Heart left ventricle (tissue), 16 donors: ENCODE measurements at regions of chr15 and their contacts with region 1.

Region 1: DNA sequence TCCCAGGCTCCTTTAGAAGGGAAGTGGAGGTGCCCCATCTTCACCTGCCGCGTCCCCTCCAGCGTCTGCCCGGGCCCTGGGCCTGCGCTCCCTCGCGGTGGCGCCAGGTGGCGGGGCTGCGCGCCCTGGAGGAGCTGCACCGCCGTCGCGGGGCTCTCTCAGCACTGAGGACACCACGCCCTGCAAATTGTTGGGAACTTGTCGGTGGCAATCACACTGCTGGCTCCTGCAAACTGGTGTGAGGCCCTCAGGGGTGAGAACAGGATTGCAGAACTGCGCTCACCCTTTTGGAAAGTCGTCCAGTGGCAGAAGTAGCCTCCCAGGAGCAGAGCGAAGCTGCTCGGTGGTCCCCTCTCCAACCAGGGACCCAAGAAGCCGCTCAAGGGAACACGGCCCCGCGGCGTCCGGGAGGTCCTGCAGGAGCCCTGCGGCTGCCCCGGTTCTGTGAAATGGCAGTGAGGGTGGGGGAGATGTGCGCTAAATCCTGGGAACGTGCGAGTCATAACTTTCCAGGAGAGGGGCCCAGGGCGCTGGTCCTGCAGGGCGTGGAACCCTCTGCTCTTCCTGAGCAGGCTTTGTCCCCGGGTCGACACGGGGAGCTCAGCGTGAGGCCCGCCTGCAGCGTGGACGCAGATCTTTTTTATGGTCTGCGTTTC is 995 bp upstream of the LRRK1 start:
- DNase-seq: peak; percentile 78 to 89 (median 80)
- ATAC-seq: peak; percentile 79 to 94 (median 94)
- H3K4me3 ChIP-seq: peak overlapping the region; percentile 27 to 78 (median 65)
- H3K27ac ChIP-seq: peak overlapping the region in 5 of 12 donors; percentile 28 to 76 (median 69)
- H3K4me1 ChIP-seq: peaks cover 0 to 41% (median 9%) of the 10 kb centered on the region in 12 donors
- H3K27me3 ChIP-seq: peaks cover 0 to 24% (median 9%) of the 10 kb centered on the region in 9 donors
- CTCF ChIP-seq: peak; percentile 79 to 93 (median 90)
- POLR2A ChIP-seq: no peak

Region 2: DNA sequence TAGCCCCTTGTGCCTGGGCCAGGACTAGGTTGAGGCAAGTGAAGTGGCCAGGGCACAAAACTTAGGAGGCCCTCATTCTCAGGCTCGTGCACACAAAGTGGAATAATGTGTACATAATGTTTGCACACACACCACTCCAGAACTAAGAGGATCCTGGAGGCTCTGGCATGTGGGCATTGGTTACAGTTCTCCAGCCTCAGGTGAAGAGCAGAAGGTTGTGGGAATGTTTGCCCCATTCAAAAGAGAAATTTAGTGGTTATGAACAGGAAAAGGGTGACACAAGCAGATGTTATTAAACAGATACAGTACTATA is 284.4 kb before region 1 on chr15:
- intact Hi-C with region 1: loop called in 1 of 10 experiments (anchors 5 kb)
- DNase-seq: no peak
- ATAC-seq: no peak
- H3K4me3 ChIP-seq: no peak overlapping the region
- H3K27ac ChIP-seq: no peak overlapping the region
- H3K4me1 ChIP-seq: peaks cover 0 to 4% (median 0%) of the 10 kb centered on the region in 12 donors
- H3K27me3 ChIP-seq: no peaks in the 10 kb centered on the region
- CTCF ChIP-seq: no peak
- POLR2A ChIP-seq: no peak

Region 3: DNA sequence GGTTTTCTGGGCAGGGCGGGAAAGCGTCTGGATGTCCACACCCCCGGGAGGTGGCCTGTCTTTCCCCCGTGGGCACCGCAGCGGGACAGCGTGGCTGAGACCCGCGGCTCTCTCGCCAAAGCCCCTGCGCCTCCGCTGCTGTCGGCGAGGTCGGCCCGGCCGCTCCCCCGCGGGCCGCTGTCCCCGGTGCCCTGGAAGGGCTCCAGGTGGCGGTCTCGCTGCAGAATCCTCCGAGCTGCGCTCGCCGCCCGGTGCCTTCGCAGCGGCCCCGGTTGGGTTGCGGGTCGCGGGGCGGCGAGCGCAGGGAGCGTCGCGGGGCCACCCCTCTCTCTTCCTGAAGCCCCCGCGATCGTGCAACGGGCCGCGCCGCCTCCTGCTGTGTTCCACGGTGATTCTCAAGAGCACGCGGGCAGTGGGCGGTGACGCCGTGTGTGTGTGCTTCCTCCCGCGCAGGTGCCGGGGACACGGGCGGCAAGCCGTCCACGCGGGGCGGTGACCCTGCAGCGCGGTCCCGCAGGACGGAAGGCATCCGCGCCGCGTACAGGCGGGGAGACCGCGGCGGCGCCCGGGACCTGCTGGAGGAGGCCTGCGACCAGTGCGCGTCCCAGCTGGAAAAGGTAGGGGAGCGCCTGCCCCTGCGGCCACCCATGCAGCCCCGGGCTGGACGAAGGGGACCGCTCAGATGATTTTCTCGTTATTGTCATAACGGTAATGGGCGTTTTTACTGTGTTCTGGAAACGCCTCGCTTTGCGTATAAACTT is 55.4 kb after region 1 on chr15:
- intact Hi-C with region 1: loop called in 1 of 10 experiments (anchors 2 kb)
- DNase-seq: peak in 1 of 5 donors; percentile 49
- ATAC-seq: peak in 1 of 4 donors; percentile 18
- H3K4me3 ChIP-seq: peak overlapping the region in 11 of 12 donors; percentile 7 to 42 (median 30)
- H3K27ac ChIP-seq: no peak overlapping the region
- H3K4me1 ChIP-seq: peaks cover 0 to 14% (median 1%) of the 10 kb centered on the region in 12 donors
- H3K27me3 ChIP-seq: peaks cover 9 to 46% (median 16%) of the 10 kb centered on the region in 9 donors
- CTCF ChIP-seq: no peak
- POLR2A ChIP-seq: no peak

Region 4: DNA sequence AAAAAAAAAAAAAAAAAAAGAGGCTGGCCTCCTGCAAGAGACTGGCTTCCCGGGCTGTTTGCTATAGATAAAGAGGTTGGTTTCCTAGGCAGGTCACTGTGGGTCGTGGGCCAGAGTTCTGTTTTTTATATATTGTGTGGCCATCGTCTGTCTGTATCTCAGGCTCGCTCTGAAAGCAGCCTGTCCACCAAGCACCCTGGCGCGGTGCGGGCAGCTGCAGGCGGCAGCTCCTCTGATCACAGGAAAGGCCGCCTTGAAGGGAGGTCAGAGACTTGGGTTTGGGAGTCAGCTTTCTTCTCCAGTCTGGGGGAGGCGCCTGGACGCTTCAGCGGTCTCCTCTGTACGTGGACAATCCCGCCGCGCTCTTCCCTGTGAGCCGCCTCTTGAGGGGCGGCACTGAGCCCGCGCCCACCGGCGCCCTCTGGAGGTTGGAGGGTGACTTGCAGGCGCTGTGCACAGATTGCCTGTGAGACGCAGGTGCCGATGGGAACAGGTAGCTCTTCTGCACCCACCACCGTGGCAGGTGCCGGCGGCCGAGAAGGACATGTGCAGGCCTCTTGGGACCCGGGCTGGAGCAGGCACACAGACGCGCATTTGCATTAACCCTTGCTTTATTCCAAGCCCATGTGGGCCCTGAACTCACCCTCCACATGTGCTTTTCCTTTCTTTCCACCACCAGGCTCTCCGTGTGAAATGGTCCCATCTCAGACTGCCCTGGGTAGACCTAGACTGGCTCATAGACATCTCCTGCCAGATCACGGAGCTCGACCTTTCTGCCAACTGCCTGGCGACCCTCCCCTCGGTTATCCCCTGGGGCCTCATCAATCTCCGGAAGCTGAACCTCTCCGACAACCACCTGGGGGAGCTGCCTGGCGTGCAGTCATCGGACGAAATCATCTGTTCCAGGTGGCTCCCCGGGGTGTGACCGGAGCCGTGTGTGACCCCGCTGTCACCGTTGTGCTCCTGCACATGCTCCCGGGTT is 90.3 kb after region 1 on chr15:
- intact Hi-C with region 1: loop called (anchors 1 to 5 kb)
- DNase-seq: peak; percentile 70 to 92 (median 79)
- ATAC-seq: peak; percentile 82 to 89 (median 86)
- H3K4me3 ChIP-seq: peak overlapping the region in 11 of 12 donors; percentile 30 to 69 (median 50)
- H3K27ac ChIP-seq: peak overlapping the region in 1 of 12 donors; percentile 48
- H3K4me1 ChIP-seq: peaks cover 0 to 20% (median 11%) of the 10 kb centered on the region in 12 donors
- H3K27me3 ChIP-seq: no peaks in the 10 kb centered on the region
- CTCF ChIP-seq: peak; percentile 91 to 99 (median 97)
- POLR2A ChIP-seq: peak in 1 of 2 donors; percentile 14

Region 5: GRCh38 chr15:101258238-101259144 is 340.3 kb after region 1 on chr15:
- intact Hi-C with region 1: loop called in 2 of 10 experiments (anchors 5 to 10 kb)
- DNase-seq: peak in 3 of 5 donors; percentile 57 to 69 (median 68)
- ATAC-seq: peak in 3 of 4 donors; percentile 51 to 66 (median 61)
- H3K4me3 ChIP-seq: no peak overlapping the region
- H3K27ac ChIP-seq: no peak overlapping the region
- H3K4me1 ChIP-seq: peaks cover 0 to 23% (median 10%) of the 10 kb centered on the region in 12 donors
- H3K27me3 ChIP-seq: no peaks in the 10 kb centered on the region
- CTCF ChIP-seq: peak; percentile 67 to 94 (median 88)
- POLR2A ChIP-seq: no peak

Region 6: GRCh38 chr15:101269479-101270223 is 351.5 kb after region 1 on chr15:
- intact Hi-C with region 1: loop called in 1 of 10 experiments (anchors 10 kb)
- DNase-seq: peak in 3 of 5 donors; percentile 32 to 71 (median 62)
- ATAC-seq: peak; percentile 48 to 75 (median 62)
- H3K4me3 ChIP-seq: no peak overlapping the region
- H3K27ac ChIP-seq: peak overlapping the region in 2 of 12 donors; percentile 37 to 44
- H3K4me1 ChIP-seq: peaks cover 0 to 45% (median 12%) of the 10 kb centered on the region in 12 donors
- H3K27me3 ChIP-seq: no peaks in the 10 kb centered on the region
- CTCF ChIP-seq: peak; percentile 17 to 55 (median 36)
- POLR2A ChIP-seq: no peak